GM18951 (cell line): ENCODE measurements at regions of chr11 and their contacts with region 1.

Region 1: DNA sequence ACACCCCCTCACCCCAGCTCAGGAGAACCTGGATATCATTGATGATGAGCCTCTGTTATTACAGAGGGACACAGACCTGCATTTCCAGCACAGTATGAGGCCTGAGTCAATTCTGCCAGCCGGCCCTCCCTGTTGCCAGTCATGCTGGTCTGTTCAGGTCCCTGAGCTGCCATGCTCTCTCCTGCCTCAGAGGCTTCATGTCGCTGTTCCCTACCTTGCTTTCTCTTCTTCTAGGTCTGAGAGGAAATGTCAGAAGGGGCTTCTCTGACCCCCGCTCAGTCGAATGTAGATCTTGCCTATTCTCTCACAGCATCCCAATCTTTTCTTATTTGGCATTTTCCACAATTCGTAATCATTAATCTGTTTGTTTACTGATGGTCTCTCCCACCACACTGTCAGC is 21.8 kb upstream of the ABCC8 start:
- POLR2A ChIP-seq: no peak

Region 2: DNA sequence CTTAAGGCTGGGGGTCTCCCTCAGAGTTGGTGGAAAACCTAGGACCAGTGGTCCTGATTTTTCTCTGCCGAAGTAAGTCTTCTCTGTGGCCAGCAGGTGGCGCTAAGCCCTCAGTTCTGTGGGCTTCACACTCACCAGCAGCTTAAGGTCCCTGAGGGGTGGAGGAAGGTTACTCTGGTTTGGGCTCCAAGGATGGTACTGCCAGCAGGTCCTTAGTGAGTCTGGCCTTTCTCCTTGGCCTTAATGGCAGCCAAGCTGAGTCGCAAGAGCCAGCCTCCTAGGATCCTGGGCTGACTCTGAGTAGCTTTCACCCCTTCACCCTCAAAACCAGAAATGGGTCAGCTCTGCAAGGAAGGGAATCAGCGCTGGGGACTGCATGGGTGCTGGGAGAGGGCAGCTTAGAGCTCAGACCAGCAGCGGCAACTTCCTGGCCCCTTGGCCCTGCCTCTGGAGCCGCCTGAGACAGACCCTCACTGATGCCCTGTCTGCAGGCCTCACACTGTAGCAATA is 114.4 kb before region 1 on chr11:
- in situ Hi-C with region 1: loop called (anchors 10 kb)
- POLR2A ChIP-seq: no peak

Region 3: DNA sequence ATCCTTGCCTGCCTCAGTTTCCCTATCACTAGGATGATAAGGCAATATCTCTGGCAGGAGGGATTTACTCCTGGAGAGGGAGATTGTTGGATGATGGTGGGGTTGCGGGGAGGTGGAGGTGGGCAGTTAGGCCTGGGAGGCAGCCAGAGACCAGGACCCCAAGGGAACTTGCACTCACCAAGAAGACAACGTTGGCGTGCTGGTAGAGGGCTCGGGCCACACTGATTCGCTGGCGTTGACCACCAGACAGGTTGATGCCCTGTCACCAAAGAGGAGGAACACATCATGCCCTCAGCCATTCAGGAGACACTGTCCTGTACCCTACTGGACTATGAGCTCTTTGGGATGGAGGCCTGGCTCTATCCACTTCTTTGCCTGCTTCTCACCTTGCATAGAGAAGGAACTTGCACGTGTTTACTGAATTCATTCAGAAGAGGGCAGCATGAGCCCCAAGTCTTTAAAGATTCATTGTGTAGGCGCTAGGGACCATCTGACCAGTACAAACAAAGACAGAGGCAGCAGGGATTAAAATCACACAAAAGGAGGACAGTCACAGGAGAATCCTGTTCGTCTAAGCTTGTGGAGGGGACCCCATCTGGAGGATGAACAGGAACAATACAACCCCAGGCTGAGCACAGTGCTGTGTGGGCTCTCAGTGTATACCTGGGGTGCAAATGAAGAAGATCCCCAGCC is 85.8 kb before region 1 on chr11:
- in situ Hi-C with region 1: no loop called
- POLR2A ChIP-seq: no peak